Thyroid gland (tissue), 4 donors: ENCODE measurements at regions of chr20 and their contacts with region 1.

Region 1: DNA sequence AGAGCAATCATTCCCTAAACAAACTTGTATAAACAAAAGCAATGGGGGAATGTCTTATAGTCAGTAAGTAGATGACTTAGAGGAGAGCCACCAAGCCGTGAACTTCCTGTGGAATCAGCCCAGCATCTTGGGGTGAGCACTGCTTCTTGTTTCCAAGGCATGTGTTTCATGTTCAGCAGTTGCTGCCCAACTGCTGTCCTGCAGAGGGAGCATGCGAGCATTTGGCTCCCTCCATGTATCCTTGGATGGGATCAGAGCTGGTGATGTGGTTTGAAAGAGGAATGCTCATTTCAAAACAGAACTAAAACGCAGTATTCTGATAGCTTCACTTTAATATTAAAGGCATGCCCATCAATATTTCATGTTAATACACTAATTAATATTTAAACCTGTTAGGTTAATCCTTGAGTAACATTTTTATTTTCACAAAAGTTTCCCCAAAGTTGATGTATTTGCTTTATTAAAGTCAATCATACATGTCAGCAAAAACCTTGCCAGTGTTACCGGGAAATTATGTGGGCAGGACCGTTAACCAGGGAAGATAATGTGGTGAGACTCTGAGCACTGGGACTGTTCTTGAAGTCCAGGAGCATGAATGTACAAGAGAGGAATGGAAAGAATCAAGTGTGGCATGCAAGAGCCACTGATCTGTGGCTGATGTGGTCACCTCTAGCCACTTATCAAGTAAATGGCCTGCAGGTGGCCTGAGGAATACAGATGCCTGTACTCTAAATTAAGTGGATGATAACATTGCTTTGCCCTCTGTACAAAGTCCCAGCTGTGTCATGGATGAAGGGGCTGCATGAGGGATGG is 172.2 kb upstream of the GGTLC1 start:
- DNase-seq: peak; percentile 67 to 73
- H3K4me3 ChIP-seq: no peak overlapping the region
- H3K27ac ChIP-seq: no peak overlapping the region
- H3K4me1 ChIP-seq: no peaks in the 10 kb centered on the region
- H3K27me3 ChIP-seq: no peaks in the 10 kb centered on the region
- CTCF ChIP-seq: peak; percentile 35 to 82 (median 64)
- POLR2A ChIP-seq: no peak

Region 2: GRCh38 chr20:23967253-23967979 is 193.4 kb before region 1 on chr20:
- intact Hi-C with region 1: no loop called
- DNase-seq: no peak
- H3K4me3 ChIP-seq: no peak overlapping the region
- H3K27ac ChIP-seq: no peak overlapping the region
- H3K4me1 ChIP-seq: no peaks in the 10 kb centered on the region
- H3K27me3 ChIP-seq: no peaks in the 10 kb centered on the region
- CTCF ChIP-seq: no peak
- POLR2A ChIP-seq: no peak

Region 3: GRCh38 chr20:24917797-24918578 is 757.2 kb after region 1 on chr20:
- intact Hi-C with region 1: loop called (anchors 5 kb)
- DNase-seq: peak; percentile 85
- H3K4me3 ChIP-seq: no peak overlapping the region
- H3K27ac ChIP-seq: peak overlapping the region in 1 of 3 donors; percentile 37
- H3K4me1 ChIP-seq: peaks cover 12 to 18% of the 10 kb centered on the region in 2 donors
- H3K27me3 ChIP-seq: no peaks in the 10 kb centered on the region
- CTCF ChIP-seq: peak; percentile 71 to 93 (median 86)
- POLR2A ChIP-seq: no peak